ENCODE measurements at regions of chr2 and their contacts with region 1.

Region 1: GRCh38 chr2:120680136-120680761 is 55.4 kb upstream of the GLI2 start:
- DNase-seq: peak; percentile 76
- H3K4me3 ChIP-seq: no peak overlapping the region
- H3K27ac ChIP-seq: no peak overlapping the region
- H3K4me1 ChIP-seq: no peaks in the 10 kb centered on the region
- H3K27me3 ChIP-seq: peaks cover 10 to 12% of the 10 kb centered on the region in 2 experiments
- CTCF ChIP-seq: peak; percentile 54 to 67
- POLR2A ChIP-seq: no peak

Region 2: GRCh38 chr2:120206022-120206581 is 474.1 kb before region 1 on chr2:
- CTCF ChIA-PET with region 1: interaction called, 5 read pairs
- POLR2A ChIA-PET with region 1: no interaction called
- dilution Hi-C with region 1: no loop called
- intact Hi-C with region 1: loop called (anchors 5 kb)
- DNase-seq: no peak
- H3K4me3 ChIP-seq: no peak overlapping the region
- H3K27ac ChIP-seq: no peak overlapping the region
- H3K4me1 ChIP-seq: no peaks in the 10 kb centered on the region
- H3K27me3 ChIP-seq: no peaks in the 10 kb centered on the region
- CTCF ChIP-seq: peak; percentile 52 to 65
- POLR2A ChIP-seq: no peak

Region 3: GRCh38 chr2:120436885-120437603 is 243.2 kb before region 1 on chr2:
- CTCF ChIA-PET with region 1: interaction called, 11 read pairs
- POLR2A ChIA-PET with region 1: no interaction called
- dilution Hi-C with region 1: no loop called
- intact Hi-C with region 1: loop called (anchors 10 kb)
- DNase-seq: peak; percentile 8
- H3K4me3 ChIP-seq: no peak overlapping the region
- H3K27ac ChIP-seq: no peak overlapping the region
- H3K4me1 ChIP-seq: no peaks in the 10 kb centered on the region
- H3K27me3 ChIP-seq: peaks cover 12 to 19% of the 10 kb centered on the region in 2 experiments
- CTCF ChIP-seq: peak; percentile 26 to 32
- POLR2A ChIP-seq: no peak

Region 4: DNA sequence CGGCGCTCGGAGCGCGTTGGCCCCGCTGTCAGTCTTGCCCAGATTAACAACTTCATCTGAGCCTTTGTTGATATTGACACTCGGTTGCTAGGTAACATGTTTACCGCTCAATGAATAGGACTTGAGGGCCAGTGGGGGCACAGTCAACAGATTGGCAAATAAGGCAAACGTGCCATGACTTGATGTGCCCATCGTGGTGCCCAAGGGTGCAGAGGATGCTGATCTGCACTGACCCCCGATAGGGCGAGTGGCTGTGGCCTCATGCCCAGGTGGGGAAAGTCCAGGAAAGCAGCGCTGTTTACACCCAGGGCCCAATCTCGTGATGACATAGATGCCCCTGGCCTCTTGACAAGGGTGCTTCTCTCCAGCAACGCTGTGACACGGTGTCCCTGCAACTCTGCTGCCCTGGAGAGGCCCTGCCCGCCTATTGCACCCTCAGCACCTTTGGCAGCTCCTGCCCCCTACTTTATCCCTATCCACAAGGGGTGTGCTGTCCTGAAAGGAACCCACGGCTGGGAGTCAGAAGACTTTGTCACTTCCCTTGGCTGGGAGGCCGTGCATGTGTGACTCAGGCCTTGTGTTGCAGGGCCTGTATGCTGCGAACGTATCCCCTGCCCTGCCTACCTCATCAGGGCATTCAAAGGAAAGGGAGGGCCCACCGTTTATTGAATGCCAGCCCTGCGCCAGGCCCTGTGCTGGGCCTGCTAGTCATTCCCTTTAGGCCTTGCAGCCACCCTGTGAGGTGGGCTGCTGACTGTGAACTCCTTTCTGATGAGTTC is 176.3 kb before region 1 on chr2:
- CTCF ChIA-PET with region 1: interaction called, 10 read pairs
- POLR2A ChIA-PET with region 1: no interaction called
- dilution Hi-C with region 1: no loop called
- intact Hi-C with region 1: loop called (anchors 5 kb)
- DNase-seq: peak; percentile 29
- H3K4me3 ChIP-seq: no peak overlapping the region
- H3K27ac ChIP-seq: no peak overlapping the region
- H3K4me1 ChIP-seq: peaks cover 8% of the 10 kb centered on the region
- H3K27me3 ChIP-seq: peaks cover 13 to 38% of the 10 kb centered on the region in 2 experiments
- CTCF ChIP-seq: no peak
- POLR2A ChIP-seq: no peak

Region 5: GRCh38 chr2:121076885-121077549 is 396.8 kb after region 1 on chr2:
- CTCF ChIA-PET with region 1: interaction called, 12 read pairs
- POLR2A ChIA-PET with region 1: no interaction called
- dilution Hi-C with region 1: no loop called
- intact Hi-C with region 1: no loop called
- DNase-seq: peak; percentile 33
- H3K4me3 ChIP-seq: no peak overlapping the region
- H3K27ac ChIP-seq: no peak overlapping the region
- H3K4me1 ChIP-seq: peaks cover 4% of the 10 kb centered on the region
- H3K27me3 ChIP-seq: peaks cover 9 to 10% of the 10 kb centered on the region in 2 experiments
- CTCF ChIP-seq: peak; percentile 97
- POLR2A ChIP-seq: no peak

Measured in endothelial cell of umbilical vein (primary cell).